Activated CD4-positive, alpha-beta T cell treated with anti-CD3 and anti-CD28 coated beads for 36 hours (primary cell): ENCODE measurements at regions of chr1 and their contacts with region 1.

Region 1: DNA sequence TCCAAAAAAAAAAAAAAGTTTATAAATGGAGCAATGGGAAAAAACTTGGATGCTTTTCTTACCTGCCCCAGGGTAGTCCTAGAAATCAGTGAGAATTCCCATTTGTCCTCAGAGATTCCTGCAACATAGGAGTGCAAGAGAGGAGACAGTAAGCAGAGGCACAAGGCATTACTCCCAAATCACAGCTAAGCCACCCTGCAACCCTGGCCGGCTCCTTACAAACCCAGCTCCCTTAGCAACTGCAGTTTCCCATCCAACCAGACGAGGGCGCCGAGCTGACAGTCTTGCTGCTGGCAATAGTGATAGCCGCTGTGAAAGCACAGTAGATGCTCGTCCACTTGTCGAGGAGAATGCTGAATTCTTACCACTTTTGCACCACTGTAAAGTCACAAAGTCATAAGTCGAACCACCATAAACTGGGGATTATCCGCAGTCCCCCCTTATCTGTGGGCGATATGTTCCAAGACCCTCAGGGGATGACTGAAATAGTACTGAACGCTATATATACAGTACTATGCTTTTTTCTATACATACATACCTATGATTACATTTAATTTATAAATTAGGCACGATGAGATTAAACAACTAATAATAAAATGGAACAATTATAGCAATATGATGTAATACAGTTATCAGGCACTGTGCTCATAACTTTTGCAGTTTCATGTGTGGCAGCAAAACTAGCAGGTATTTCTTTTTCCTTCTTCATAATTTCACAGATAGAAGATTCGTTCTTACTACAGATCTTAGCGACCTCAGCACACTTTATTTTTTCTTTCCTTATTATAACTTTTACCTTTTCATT is 6.0 kb upstream of the PITHD1 start:
- DNase-seq: peak; percentile 94
- ATAC-seq: peak; percentile 95
- H3K4me3 Mint-ChIP-seq: no peak overlapping the region
- H3K27ac Mint-ChIP-seq: no peak overlapping the region
- H3K4me1 Mint-ChIP-seq: peaks cover 22% of the 10 kb centered on the region
- H3K27me3 Mint-ChIP-seq: no peaks in the 10 kb centered on the region

Region 2: DNA sequence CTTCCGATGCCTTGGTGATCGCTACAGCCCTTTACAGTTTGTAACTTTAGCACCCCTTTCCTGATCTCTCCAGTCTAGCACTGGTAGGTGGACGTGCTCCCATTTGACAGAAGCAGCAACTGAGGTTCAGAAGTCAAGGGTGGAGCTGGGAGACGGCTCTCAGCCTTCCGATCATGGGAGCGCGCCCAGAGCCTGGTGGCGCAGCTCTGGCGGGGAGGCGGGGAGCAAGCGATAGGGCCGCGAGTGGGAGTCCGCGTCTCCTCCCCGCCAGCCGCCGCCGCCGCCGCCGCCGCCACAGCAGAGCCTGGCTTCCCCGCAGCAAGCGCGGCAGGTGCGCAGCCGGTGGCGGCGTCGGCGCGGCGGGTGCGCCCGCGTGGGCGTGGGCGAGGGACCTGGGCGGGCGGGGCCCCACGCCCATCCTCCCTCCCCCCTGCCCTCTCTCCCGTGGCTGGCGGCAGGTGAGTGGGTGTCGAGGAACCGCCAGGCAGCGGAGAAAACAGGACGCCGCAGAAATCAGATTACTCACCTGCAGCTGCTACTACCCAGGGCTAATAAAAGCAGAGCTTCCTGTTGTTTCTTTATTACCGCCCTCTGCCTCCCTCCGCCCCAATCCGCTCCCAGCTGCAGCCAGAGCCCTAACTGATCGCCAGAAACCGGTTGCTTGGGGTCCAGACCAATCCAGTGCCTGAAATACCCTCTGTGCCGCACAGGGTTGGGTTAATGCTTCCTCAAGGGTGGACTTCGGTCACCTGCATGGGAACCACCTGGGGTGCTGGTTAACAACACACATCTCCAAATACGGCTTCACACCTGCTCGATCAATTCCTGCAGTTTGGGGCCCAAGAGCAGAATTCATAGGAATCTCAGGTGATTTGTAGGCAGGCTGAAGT is 152.7 kb before region 1 on chr1:
- CTCF ChIA-PET with region 1: no interaction called
- POLR2A ChIA-PET with region 1: no interaction called
- intact Hi-C with region 1: no loop called
- DNase-seq: peak; percentile 90
- ATAC-seq: peak; percentile 68
- H3K4me3 Mint-ChIP-seq: peak overlapping the region; percentile 60
- H3K27ac Mint-ChIP-seq: peak overlapping the region; percentile 79
- H3K4me1 Mint-ChIP-seq: peaks cover 89% of the 10 kb centered on the region
- H3K27me3 Mint-ChIP-seq: no peaks in the 10 kb centered on the region

Region 3: GRCh38 chr1:23651069-23651808 is 121.0 kb before region 1 on chr1:
- CTCF ChIA-PET with region 1: no interaction called
- POLR2A ChIA-PET with region 1: no interaction called
- intact Hi-C with region 1: no loop called
- DNase-seq: no peak
- ATAC-seq: no peak
- H3K4me3 Mint-ChIP-seq: no peak overlapping the region
- H3K27ac Mint-ChIP-seq: no peak overlapping the region
- H3K4me1 Mint-ChIP-seq: no peaks in the 10 kb centered on the region
- H3K27me3 Mint-ChIP-seq: no peaks in the 10 kb centered on the region

Region 4: GRCh38 chr1:23867953-23868556 is 95.8 kb after region 1 on chr1 and contains the start of gene FUCA1:
- CTCF ChIA-PET with region 1: interaction called, 3 read pairs
- POLR2A ChIA-PET with region 1: no interaction called
- intact Hi-C with region 1: loop called (anchors 1 kb)
- DNase-seq: peak; percentile 95
- ATAC-seq: peak; percentile 97
- H3K4me3 Mint-ChIP-seq: peak within 1 kb of the TSS; percentile 76
- H3K27ac Mint-ChIP-seq: peak within 1 kb of the TSS; percentile 77
- H3K4me1 Mint-ChIP-seq: peaks cover 19% of the 10 kb centered on the region
- H3K27me3 Mint-ChIP-seq: no peaks in the 10 kb centered on the region
- total RNA-seq, gene FUCA1: 4.2 to 4.5 TPM

Region 5: DNA sequence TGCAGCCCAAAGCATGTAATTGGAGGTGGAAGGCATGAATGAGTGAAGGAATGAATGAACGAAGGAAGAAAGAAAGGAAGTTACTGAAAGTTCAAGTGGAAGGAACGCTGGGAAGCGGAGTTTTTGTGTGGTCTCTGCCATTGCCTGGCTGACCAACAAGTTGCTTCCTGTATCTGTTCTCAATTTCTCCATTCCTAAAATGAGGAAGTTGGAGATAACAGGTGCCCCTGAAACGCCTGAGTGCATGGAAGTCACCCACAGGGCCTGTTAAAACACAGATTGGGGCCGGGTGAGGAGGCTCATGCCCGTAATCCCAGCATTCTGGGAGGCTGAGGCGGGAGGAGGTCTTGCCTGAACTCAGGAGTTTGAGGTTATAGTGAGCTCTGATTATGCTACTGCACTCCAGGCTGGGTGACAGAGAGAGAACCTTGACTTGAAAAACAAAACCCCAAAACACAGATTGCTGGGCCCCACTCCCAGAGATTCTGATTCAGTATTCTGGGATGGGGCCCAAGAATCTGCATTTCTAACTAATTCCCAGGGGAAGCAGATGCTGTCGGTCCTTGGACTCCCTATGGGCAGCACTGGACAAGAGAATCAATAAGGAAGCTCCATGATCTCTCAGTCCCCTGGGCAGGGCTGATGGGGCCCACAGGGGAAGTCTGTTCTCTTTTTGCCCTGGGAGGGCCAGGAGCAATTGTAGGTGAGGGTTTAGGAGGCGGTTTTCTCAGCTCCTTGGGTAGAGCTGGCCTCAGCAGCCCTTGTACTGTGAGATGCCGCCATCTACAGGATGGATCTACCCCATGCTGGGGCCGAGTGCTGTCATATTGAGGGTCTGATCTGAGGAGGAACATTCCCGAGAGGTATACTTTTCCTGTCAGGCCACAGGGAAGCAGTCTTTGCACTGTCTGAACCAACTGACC is 144.2 kb after region 1 on chr1:
- CTCF ChIA-PET with region 1: interaction called, 31 read pairs
- POLR2A ChIA-PET with region 1: interaction called, 7 read pairs
- intact Hi-C with region 1: loop called in 1 of 2 experiments (anchors 1 kb)
- DNase-seq: peak; percentile 75
- ATAC-seq: peak; percentile 94
- H3K4me3 Mint-ChIP-seq: no peak overlapping the region
- H3K27ac Mint-ChIP-seq: no peak overlapping the region
- H3K4me1 Mint-ChIP-seq: peaks cover 9% of the 10 kb centered on the region
- H3K27me3 Mint-ChIP-seq: peaks cover 2% of the 10 kb centered on the region

Region 6: DNA sequence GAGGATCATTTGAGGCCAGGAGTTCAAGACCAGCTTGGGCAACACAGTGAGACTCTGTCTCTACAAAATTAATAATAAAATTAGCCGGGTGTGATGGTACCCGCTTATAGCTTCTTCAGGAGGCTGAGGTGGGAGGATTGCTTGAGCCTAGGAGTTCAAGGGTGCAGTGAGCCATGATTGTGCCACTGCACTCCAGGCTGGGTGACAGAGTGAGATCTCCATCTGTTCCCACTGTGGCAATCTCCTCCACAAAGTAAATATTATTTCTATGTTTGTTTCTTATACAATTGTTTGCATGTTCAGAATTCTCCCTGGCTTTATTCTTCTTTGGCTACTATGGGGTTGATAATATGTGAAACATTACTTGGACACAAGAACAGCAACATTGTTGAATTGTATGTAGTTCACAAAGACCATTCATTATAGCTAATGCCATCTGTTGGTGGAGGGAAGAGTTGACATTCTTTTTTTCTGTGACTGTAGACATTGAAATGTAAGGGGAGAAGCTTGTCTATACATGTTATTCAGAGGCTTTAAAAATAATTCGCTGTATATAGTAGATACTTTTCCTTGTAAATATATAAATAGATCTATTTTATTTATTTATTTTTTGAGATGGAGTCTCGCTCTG is 255.7 kb after region 1 on chr1:
- CTCF ChIA-PET with region 1: interaction called, 5 read pairs
- POLR2A ChIA-PET with region 1: no interaction called
- intact Hi-C with region 1: loop called in 1 of 2 experiments (anchors 5 kb)
- DNase-seq: no peak
- ATAC-seq: no peak
- H3K4me3 Mint-ChIP-seq: no peak overlapping the region
- H3K27ac Mint-ChIP-seq: no peak overlapping the region
- H3K4me1 Mint-ChIP-seq: no peaks in the 10 kb centered on the region
- H3K27me3 Mint-ChIP-seq: no peaks in the 10 kb centered on the region